ENCODE measurements at regions of chr5 and their contacts with region 1.

Region 1: DNA sequence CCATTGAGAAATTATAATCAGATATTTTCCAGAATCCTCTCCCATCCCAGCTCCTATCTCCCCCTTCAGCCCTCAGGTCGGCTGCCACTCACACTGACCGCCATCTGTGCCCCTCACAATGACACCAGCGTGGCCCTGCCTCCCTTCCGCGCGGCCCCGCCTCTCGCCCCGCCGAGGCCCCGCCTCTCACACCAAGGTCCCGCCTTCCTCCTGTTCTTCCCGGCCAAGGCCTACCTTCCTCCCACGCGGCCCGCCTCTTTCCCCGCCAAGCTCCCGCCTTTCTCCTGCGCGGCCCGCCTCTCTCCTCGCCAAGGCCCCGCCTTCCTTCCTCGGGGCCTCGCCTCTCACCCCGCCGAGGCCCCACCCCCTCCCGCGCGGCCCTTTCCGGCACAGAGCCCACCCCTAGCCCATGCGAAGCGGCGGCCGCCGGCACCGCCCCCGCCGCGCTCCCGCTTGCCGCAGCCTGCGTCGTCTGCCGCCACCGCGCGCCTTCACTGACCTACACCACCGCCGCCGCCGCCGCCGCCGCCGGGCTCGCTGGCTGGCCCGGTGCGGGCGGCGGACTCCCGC is at the start of gene DNAJC21:
- DNase-seq: peak; percentile 88
- ATAC-seq: peak; percentile 92
- H3K4me3 ChIP-seq: peak within 1 kb of the TSS; percentile 83
- H3K27ac ChIP-seq: peak within 1 kb of the TSS; percentile 86
- H3K4me1 ChIP-seq: no peaks in the 10 kb centered on the region
- H3K27me3 ChIP-seq: no peaks in the 10 kb centered on the region
- CTCF ChIP-seq: no peak
- EP300 ChIP-seq: no peak
- POLR2A ChIP-seq: peak; percentile 78
- RAD21 ChIP-seq: no peak
- polyA plus RNA-seq, gene DNAJC21: 14.6 to 22.0 TPM

Region 2: DNA sequence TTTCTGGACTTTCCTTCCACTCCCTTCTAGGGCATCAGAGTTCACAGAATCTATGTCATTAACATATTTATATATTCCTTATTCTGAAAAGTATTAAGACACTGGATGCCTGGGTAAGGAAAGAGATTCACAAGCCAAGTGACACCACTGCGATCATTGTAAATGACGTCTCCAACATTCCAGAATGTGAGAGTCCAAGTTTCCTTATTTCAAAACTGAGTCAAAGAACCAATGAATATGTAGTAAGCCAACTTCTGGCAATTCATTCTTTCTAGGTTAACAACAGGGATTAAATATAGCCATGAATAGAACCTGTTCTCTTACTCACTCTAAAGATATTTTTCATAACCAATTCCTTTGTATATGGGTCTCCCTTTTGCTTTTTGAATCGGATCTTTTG is 255.0 kb before region 1 on chr5:
- CTCF ChIA-PET with region 1: no interaction called
- POLR2A ChIA-PET with region 1: no interaction called
- RAD21 ChIA-PET with region 1: no interaction called
- SMC1A ChIA-PET with region 1: no interaction called
- in situ Hi-C with region 1: no loop called
- intact Hi-C with region 1: no loop called
- DNase-seq: no peak
- ATAC-seq: no peak
- H3K4me3 ChIP-seq: no peak overlapping the region
- H3K27ac ChIP-seq: no peak overlapping the region
- H3K4me1 ChIP-seq: no peaks in the 10 kb centered on the region
- H3K27me3 ChIP-seq: no peaks in the 10 kb centered on the region; a peak in 1 of 4 replicates
- CTCF ChIP-seq: no peak
- EP300 ChIP-seq: no peak
- POLR2A ChIP-seq: no peak
- RAD21 ChIP-seq: no peak

Region 3: GRCh38 chr5:34915139-34915855 is 13.9 kb before region 1 on chr5 and contains the starts of genes BRIX1 and RAD1:
- CTCF ChIA-PET with region 1: interaction called, 13 read pairs
- POLR2A ChIA-PET with region 1: interaction called, 79 read pairs
- RAD21 ChIA-PET with region 1: interaction called, 50 read pairs
- SMC1A ChIA-PET with region 1: interaction called, 14 read pairs
- in situ Hi-C with region 1: no loop called
- intact Hi-C with region 1: loop called (anchors 1 kb)
- DNase-seq: peak; percentile 86
- ATAC-seq: peak; percentile 96
- H3K4me3 ChIP-seq: peak within 1 kb of the TSS; percentile 100
- H3K27ac ChIP-seq: peak within 1 kb of the TSS; percentile 90
- H3K4me1 ChIP-seq: peaks cover 6% of the 10 kb centered on the region; the same call in 1 of the 2 replicates
- H3K27me3 ChIP-seq: no peaks in the 10 kb centered on the region
- CTCF ChIP-seq: peak in 2 of 3 experiments; percentile 12 to 43; a peak in 3 of 6 replicates
- EP300 ChIP-seq: 0 out of 4 replicates have a peak, but pooled peaks of 1 of the 2 experiments have one; percentile 35
- POLR2A ChIP-seq: peak; percentile 90
- RAD21 ChIP-seq: no peak
- polyA plus RNA-seq, gene BRIX1: 58.2 to 77.4 TPM
- polyA plus RNA-seq, gene RAD1: 43.4 to 58.4 TPM

Region 4: GRCh38 chr5:36151434-36152323 is 1222.4 kb after region 1 on chr5 and contains the starts of genes LMBRD2 and SKP2:
- CTCF ChIA-PET with region 1: no interaction called
- POLR2A ChIA-PET with region 1: no interaction called
- RAD21 ChIA-PET with region 1: no interaction called
- SMC1A ChIA-PET with region 1: no interaction called
- in situ Hi-C with region 1: no loop called
- intact Hi-C with region 1: loop called (anchors 10 kb)
- DNase-seq: peak; percentile 95
- ATAC-seq: peak; percentile 97
- H3K4me3 ChIP-seq: peak within 1 kb of the TSS; percentile 94
- H3K27ac ChIP-seq: peak within 1 kb of the TSS; percentile 82
- H3K4me1 ChIP-seq: no peaks in the 10 kb centered on the region
- H3K27me3 ChIP-seq: no peaks in the 10 kb centered on the region
- CTCF ChIP-seq: no peak
- EP300 ChIP-seq: no peak
- POLR2A ChIP-seq: peak; percentile 82
- RAD21 ChIP-seq: no peak
- polyA plus RNA-seq, gene LMBRD2: 0.90 to 1.8 TPM
- polyA plus RNA-seq, gene SKP2: 13.9 to 17.9 TPM